Common myeloid progenitor, CD34-positive (primary cell): ENCODE measurements at regions of chr2 and their contacts with region 1.

Region 1: DNA sequence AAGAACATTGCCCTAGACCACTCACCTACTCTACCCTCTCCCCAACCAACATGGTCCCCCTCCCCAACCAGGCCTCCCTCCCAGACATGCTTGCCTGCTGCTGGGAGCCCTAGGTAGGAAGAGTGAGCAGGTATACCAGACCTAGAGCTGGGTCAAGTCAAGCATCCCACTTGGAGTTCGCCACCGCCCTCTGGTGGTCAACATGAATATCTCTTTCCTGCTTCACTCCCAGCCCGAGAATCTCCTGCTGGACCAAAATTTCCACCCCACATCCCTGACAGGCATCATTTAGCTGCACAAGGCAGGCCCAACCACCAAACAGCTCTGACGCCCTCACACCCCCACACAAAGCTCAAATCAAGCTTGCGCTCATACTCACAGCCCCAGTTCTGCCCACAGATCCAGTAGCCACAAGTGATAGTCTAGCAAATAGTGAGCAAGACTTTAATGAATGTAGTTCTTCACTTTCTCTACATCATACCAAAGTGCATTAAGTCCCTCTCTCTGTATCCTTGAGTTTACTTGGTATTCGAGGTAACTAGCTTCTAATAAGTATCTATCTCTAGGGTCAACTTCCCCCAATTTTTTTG is 116.0 kb downstream of the TNS1 start:
- DNase-seq: peak; percentile 73 to 84 (median 75)
- H3K4me3 ChIP-seq: no peak overlapping the region
- H3K27ac ChIP-seq: no peak overlapping the region
- H3K4me1 ChIP-seq: no peaks in the 10 kb centered on the region
- H3K27me3 ChIP-seq: no peaks in the 10 kb centered on the region

Region 2: DNA sequence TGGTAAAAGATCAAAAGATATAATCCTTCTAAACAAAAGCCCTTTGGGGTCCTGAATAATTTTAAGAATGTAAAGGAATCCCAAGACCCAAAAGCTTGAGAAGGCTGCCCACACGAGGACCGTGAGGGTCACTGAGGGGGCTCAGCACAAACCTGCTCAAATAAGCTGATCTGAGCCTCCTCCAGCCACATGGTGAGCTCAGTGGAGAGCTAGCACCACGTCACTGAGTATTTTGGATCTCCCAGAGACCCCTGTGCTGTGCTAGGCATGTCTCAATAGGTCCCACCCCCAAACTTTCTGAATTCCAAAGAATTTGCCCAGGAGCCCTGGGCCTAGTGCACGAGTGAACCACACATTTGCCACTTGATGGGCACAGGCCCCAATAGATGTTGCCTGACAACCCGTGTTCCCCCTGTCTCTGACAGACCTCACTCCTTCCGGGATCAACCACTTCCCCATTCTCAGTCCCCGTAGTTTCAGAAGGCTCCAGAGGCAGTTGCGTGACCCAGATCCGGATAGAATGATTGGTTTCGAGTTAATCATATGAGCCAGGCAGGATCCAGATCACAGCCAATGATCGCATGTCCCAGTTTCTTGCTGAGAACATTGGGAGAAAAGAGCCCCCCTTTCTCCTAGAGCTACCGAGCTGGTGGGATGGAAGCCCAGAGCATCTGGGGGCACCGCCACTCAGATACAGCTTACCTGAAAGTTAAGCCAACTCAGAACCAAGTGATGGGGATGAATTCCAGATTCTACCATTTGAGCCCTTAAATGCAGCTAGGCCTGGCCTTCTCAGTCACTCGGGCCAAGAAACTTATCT is 87.9 kb before region 1 on chr2:
- CTCF ChIA-PET with region 1: interaction called, 238 read pairs
- POLR2A ChIA-PET with region 1: no interaction called
- DNase-seq: peak; percentile 92 to 97 (median 96)
- H3K4me3 ChIP-seq: no peak overlapping the region
- H3K27ac ChIP-seq: peak overlapping the region; percentile 20 to 64
- H3K4me1 ChIP-seq: peaks cover 0 to 39% (median 32%) of the 10 kb centered on the region in 4 experiments
- H3K27me3 ChIP-seq: no peaks in the 10 kb centered on the region

Region 3: DNA sequence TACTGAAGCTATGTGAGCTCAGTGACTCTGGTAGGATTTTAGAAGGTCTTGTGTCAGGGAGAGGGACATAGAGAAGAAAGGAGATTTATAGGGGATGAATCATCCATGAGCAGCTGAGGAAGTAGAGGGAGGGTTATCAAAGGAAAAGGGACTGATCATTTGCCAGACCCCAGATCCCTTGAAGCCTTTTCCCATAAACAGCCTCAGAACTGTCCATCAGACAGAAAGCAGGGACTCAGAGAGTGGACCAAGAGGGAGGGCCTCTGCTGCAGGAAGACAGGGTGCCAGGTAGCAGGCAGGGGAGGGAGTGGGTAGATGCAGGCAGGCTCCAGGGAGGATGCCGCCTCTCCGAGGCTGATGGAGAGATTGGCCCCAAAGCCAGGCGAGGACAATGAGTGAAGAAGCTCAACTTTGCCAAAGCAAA is 17.9 kb before region 1 on chr2:
- CTCF ChIA-PET with region 1: interaction called, 13 read pairs
- POLR2A ChIA-PET with region 1: no interaction called
- DNase-seq: no peak
- H3K4me3 ChIP-seq: no peak overlapping the region
- H3K27ac ChIP-seq: no peak overlapping the region
- H3K4me1 ChIP-seq: peaks cover 0 to 3% (median 0%) of the 10 kb centered on the region in 4 experiments
- H3K27me3 ChIP-seq: no peaks in the 10 kb centered on the region

Region 4: GRCh38 chr2:217899231-217900009 is 12.6 kb after region 1 on chr2:
- CTCF ChIA-PET with region 1: interaction called, 24 read pairs
- POLR2A ChIA-PET with region 1: no interaction called
- DNase-seq: peak in 1 of 3 donors; percentile 31
- H3K4me3 ChIP-seq: no peak overlapping the region
- H3K27ac ChIP-seq: no peak overlapping the region
- H3K4me1 ChIP-seq: peaks cover 8 to 38% (median 34%) of the 10 kb centered on the region in 4 experiments
- H3K27me3 ChIP-seq: no peaks in the 10 kb centered on the region

Region 5: GRCh38 chr2:217988014-217988839 is 101.4 kb after region 1 on chr2:
- CTCF ChIA-PET with region 1: interaction called, 96 read pairs
- POLR2A ChIA-PET with region 1: no interaction called
- DNase-seq: peak; percentile 59 to 82 (median 72)
- H3K4me3 ChIP-seq: no peak overlapping the region
- H3K27ac ChIP-seq: no peak overlapping the region
- H3K4me1 ChIP-seq: no peaks in the 10 kb centered on the region
- H3K27me3 ChIP-seq: no peaks in the 10 kb centered on the region